Activated T-helper 1 cell treated with anti-CD3 and anti-CD28 coated beads, Interleukin-12 subunit alpha, Interleukin-12 subunit beta, Interleukin-2, Interleukin-4 antibody, amounts not matched to agents 30 ng/mL and 10 ng/mL and 1 ng/mL, durations not matched to agents 14 hours and 24 hours and 36 hours (primary cell): ENCODE measurements at regions of chr3 and their contacts with region 1.

Region 1: DNA sequence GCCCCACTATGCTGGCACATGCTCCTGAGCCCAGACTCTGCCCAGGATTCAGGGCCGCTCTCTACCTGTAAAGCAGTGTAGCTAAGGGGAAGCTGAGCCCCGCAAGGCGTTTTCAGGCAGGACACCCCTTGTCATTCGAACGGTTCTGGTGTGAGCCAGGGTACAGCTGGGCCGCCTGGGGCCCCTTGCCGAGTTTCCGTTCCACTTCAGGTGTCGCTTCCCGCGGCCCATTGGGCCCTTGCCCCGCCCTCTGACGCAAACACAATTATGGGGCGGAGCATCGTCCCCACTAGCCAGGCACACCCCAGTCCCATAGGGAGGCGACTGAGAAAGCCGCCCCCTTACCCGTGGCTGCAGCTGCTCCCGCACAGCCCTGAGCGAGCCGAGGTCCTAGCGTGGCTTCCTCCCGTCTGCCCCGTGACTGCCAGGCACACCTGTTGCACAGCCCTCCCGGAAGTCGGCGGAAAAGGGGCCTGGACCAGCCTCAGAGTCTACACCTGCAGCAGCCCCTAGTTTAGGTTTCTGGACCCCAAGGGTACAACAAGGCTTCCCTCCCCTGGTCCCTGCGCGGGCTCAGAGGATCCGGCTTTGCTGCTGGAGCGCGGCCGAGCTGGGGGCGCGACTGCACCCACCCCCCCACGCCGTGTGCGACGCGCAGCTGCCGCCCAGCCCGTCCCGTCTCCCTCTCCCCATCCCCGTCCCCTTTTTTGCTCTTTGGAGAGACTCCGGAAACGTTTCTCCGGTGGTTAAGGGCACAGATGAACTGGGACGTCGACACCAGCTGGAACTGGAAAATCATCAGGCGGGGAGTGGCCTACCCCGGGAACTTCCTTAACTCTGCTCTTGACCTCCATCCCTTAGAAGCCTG is at the start of gene PLSCR2:
- DNase-seq: peak; percentile 54
- H3K4me3 Mint-ChIP-seq: peak within 1 kb of the TSS; percentile 82
- H3K27ac Mint-ChIP-seq: peak within 1 kb of the TSS; percentile 50
- H3K4me1 Mint-ChIP-seq: peaks cover 7% of the 10 kb centered on the region
- H3K27me3 Mint-ChIP-seq: peaks cover 4% of the 10 kb centered on the region
- total RNA-seq, gene PLSCR2: not detected in 2 replicates

Region 2: DNA sequence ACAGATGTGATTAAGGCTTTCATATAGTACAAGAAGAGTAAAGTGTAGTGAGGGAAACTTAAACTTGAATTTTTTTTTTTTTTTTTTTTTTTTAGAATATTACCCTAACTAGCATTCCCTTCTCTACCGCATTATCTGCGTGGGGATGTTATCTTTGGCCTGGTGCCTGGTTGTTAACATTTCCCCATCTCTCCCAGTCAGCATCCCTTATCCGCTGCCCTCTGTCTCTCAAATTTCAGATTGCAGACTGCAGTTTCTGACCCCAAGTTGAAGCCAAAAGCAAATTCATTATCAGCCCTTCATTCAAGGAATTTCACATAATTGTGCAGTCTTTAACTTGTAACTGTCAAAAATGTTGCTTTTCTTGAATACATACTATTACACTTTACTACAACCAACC is 661.4 kb before region 1 on chr3:
- intact Hi-C with region 1: no loop called
- DNase-seq: no peak
- H3K4me3 Mint-ChIP-seq: no peak overlapping the region
- H3K27ac Mint-ChIP-seq: no peak overlapping the region
- H3K4me1 Mint-ChIP-seq: no peaks in the 10 kb centered on the region
- H3K27me3 Mint-ChIP-seq: no peaks in the 10 kb centered on the region

Region 3: GRCh38 chr3:146493761-146494160 is 24.4 kb after region 1 on chr3:
- intact Hi-C with region 1: loop called (anchors 2 kb)
- DNase-seq: no peak
- H3K4me3 Mint-ChIP-seq: no peak overlapping the region
- H3K27ac Mint-ChIP-seq: no peak overlapping the region
- H3K4me1 Mint-ChIP-seq: peaks cover 22% of the 10 kb centered on the region
- H3K27me3 Mint-ChIP-seq: peaks cover 24% of the 10 kb centered on the region